ENCODE measurements at regions of chr2 and their contacts with region 1.

Region 1: DNA sequence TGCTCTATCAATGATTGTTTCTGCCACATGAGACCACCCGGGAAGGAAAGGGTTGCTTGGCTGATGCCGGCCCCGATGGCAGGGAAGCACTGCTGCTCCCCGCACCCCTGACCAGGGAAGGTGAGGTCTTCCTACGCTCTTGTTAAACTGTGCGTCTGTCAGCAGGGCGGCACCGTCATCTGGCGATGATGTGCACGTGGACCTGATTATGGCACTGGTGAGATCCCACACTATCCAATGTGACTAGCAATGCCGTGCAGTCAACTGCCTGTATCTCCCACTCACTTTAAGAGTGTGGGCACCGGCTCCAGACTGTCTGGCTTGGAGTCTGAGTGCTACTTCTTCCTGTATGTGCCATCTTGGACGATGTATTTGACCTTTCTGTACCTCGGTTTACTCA is 209.2 kb downstream of the MYT1L start:
- DNase-seq: no peak
- H3K4me3 ChIP-seq: no peak overlapping the region
- H3K27ac ChIP-seq: no peak overlapping the region
- H3K4me1 ChIP-seq: no peaks in the 10 kb centered on the region
- H3K27me3 ChIP-seq: no peaks in the 10 kb centered on the region
- CTCF ChIP-seq: no peak
- POLR2A ChIP-seq: no peak

Region 2: DNA sequence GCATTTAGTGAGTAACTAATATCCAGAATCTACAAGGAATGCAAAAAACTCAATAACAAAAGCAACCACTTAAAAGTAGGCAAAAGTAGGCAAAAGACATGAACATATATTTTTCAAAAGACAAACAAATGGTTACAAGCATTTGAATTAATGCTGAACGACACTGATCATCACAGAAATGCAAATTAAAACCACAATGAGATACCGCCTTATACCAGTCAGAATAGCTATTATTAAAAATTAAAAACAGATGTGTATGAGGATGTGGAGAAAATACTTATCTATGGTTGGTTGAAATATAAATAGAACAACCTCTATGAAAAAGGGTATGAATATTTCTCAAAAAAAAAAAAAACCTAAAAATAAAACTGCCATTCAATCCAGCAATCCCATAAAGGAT is 1119.5 kb before region 1 on chr2:
- intact Hi-C with region 1: no loop called
- DNase-seq: no peak
- H3K4me3 ChIP-seq: no peak overlapping the region
- H3K27ac ChIP-seq: no peak overlapping the region
- H3K4me1 ChIP-seq: no peaks in the 10 kb centered on the region
- H3K27me3 ChIP-seq: peaks cover 0 to 4% of the 10 kb centered on the region in 2 donors
- CTCF ChIP-seq: no peak
- POLR2A ChIP-seq: no peak

Region 3: DNA sequence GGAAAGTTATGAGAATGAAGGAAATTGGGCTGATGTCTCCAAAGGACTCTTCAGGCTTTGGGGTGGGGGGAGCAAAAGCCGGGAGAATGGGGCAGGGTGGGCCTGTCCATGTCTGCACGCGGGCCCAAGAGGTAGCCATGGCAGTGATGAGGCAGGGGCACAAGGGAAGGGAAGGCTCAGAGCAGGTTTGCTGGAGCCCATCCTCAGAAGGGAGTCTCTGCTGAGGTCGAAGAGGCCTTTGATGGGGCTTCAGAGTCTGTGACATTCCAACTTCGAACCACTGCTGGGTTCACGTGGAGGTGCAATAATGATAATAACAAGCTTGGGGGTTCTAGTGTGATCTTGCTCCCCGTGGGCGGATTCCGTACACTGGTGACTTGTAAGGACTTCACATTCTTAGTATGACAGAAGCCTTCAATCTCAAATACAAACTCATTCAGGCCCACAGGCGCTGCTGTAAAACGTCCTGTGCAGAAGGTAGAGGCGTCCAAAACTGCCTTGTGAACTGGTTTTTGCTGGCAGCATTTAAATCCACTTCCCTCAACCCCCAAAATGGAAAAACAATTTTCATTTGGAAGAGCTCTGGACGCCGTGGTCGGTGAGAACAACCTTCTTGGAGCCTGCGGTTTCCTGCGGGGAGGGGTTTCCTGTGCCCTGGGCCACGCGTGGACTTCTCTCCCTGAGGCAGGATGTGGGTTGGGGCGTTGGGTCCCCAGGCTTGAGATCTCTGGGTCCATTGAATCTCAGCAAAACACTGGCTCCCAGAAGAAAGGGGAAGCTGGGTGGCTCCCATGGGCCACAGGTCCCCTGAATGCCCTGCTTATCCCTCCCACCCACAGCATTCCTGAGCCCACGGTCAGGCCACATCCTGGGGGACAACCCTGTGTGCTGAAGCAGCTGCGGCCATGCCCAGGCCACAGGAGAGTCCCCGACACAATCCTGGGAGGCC is 557.7 kb before region 1 on chr2:
- intact Hi-C with region 1: loop called (anchors 5 kb)
- DNase-seq: no peak
- H3K4me3 ChIP-seq: no peak overlapping the region
- H3K27ac ChIP-seq: no peak overlapping the region
- H3K4me1 ChIP-seq: no peaks in the 10 kb centered on the region
- H3K27me3 ChIP-seq: no peaks in the 10 kb centered on the region
- CTCF ChIP-seq: no peak
- POLR2A ChIP-seq: no peak